ENCODE measurements at regions of chr19 and their contacts with region 1.

Region 1: DNA sequence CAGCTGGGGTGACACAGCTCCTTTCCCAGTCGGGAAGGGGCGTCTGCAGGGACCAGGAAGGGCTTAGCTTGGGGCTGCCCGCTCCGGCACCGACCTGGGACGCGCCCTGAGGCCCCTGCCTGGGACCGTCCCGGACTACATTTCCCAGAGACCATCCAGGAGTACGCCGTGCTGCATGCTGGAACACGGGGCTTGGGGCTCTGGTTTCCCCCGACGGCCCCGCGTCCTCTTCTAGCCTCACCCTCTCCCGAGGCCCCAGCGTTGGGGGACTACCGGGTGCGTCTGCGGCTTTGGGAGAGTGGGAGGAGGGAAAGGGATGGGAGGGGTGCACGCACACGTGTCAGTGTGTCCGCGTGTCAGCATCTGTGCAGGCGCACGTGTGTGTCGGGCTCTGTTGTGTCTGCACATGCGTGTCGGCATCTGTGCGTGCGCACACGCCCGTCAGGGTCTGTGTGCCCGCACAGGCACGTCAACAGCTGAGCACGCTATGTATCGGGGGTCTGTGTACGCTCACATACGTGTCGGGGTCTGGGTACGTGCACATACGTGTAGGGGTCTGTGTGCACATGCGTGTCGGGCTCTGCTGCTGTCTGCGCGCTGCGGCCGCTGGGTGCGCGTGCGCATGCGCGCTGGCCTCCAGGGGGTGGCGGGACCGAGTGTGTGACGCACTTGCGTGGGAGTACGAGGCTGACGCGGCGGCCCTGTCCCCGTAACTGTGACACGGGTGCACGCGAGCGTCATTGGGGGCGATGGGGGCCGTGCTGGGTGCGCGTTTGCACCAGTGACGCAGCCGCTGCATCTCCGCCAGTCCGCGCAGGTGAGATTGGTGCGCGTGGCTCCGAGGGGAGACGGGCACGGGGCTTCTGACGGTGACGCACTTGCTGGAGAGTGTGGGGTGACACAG is at the start of gene ZNF331:
- DNase-seq: peak; percentile 72 to 98 (median 80)

Region 2: GRCh38 chr19:53553884-53554791 is 16.4 kb after region 1 on chr19:
- intact Hi-C with region 1: loop called (anchors 2 kb)
- DNase-seq: peak; percentile 72 to 98 (median 84)

Region 3: DNA sequence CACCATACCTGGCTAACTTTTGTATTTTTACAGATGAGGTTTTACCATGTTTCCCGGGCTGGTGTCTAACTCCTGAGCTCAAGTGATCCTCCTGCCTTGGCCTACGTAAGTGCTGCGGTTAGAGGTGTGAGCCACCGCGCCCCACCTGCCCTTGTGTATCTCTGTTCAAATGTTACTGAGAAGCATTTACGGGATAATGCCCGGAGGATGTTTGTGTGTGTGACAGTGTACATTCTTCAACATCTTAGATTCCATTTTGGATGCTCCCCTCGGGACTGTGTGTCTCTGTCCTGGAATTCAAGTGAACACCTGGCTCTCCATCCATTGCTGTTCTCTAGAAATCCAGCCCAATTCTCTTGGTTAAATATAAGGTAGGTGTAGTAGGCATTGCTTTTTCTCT is 192.7 kb after region 1 on chr19:
- intact Hi-C with region 1: no loop called
- DNase-seq: no peak

Measured in posterior cingulate gyrus (tissue), 11 donors.